ENCODE measurements at regions of chr3 and their contacts with region 1.

Region 1: GRCh38 chr3:45118615-45119071 is 27.5 kb downstream of the CDCP1 start:
- DNase-seq: peak; percentile 30
- H3K4me3 Mint-ChIP-seq: peak overlapping the region; percentile 29
- H3K27ac Mint-ChIP-seq: peak overlapping the region; percentile 86
- H3K4me1 Mint-ChIP-seq: peaks cover 57% of the 10 kb centered on the region
- H3K27me3 Mint-ChIP-seq: peaks cover 22% of the 10 kb centered on the region

Region 2: DNA sequence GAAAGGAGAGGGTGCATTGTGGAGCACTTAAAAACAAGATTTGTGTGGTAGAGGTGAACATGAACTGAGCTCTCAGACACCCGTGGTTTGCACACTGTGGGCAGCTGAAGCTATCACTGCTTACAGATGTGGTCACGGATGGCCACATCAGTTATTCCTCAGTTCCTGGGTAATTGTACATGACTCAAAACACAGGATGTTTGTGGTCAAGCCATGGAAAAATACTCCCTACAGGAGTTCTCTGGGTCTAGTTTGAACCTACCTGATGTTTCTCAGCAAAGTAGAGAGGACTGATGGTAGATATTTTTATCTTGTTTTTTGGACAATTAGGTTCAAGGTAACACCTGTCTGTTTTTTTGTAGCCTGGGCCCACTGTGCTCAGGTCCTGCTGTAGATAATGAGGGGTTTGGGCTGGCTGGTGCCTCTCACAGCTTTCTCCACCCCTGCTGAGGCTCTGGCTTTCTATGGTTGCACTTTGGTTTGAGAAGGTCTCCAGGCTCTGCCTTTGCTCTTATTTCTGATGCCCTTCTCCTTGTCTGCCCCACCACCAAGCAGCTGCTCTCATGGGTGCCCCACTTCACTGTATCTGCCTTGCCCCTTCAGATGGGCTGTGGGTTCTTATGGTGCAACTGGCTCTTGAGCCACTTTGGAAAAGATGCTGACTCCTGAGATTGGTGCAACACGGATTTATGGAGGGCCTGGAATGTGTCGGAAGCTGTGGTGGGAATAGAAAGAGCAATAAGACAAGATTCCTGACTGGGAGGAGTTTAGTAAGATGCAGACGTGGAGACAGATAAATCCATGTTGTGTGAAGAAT is 12.6 kb before region 1 on chr3:
- CTCF ChIA-PET with region 1: interaction called, 5 read pairs
- POLR2A ChIA-PET with region 1: interaction called, 15 read pairs
- DNase-seq: peak; percentile 81
- H3K4me3 Mint-ChIP-seq: peak overlapping the region; percentile 15
- H3K27ac Mint-ChIP-seq: peak overlapping the region; percentile 65
- H3K4me1 Mint-ChIP-seq: peaks cover 73% of the 10 kb centered on the region
- H3K27me3 Mint-ChIP-seq: peaks cover 22% of the 10 kb centered on the region

Region 3: GRCh38 chr3:45145681-45146614 is 27.3 kb after region 1 on chr3 and contains the start of gene CDCP1:
- CTCF ChIA-PET with region 1: no interaction called
- POLR2A ChIA-PET with region 1: no interaction called
- DNase-seq: no peak
- H3K4me3 Mint-ChIP-seq: peak within 1 kb of the TSS; percentile 70
- H3K27ac Mint-ChIP-seq: no peak within 1 kb of the TSS
- H3K4me1 Mint-ChIP-seq: peaks cover 16% of the 10 kb centered on the region
- H3K27me3 Mint-ChIP-seq: peaks cover 69% of the 10 kb centered on the region
- total RNA-seq, gene CDCP1: 1.9 to 2.2 TPM

Region 4: DNA sequence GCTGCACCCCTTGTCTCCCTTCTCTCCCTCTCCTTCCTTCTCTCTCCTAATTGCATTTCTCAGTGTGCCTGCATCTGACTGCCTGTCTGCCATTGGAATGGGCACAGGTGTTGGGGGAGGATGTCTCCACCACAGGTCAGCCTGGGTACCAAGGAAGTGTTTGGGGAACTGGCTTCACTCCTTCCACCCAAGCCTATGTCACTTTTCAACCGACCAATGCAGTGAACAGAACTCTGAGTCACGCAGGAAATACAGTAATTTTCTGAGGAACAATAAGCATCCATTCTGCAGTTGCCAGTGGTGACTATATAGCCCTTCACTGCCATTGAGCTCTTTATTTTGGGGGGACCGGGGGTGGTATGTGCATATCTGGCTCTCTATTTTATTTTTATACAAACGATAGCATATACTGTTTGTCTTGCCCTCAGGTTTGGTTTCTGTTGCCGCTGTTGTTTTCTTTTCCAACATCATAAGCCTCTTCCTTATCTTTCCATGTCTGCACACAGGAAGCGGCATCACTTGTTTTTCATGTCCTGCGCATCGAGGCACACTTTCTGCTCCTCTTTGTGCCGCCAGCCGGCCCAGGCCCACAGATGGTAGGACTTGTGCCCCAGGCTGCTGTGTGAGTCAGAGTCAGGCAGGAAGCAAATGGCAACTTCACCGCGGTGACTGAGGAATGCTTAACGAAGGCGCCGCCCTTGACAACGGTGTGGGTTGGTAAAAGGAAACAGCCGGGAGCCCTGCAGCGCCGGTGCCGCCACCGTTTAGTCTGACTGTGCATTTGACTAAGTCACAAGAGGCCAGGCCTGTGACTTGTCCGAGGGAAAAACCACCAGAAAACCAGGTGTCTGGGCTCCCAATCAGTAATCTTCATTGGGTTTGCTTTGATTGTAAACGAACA is 48.6 kb after region 1 on chr3:
- CTCF ChIA-PET with region 1: interaction called, 3 read pairs
- POLR2A ChIA-PET with region 1: interaction called, 14 read pairs
- DNase-seq: peak; percentile 91
- H3K4me3 Mint-ChIP-seq: peak overlapping the region; percentile 47
- H3K27ac Mint-ChIP-seq: peak overlapping the region; percentile 91
- H3K4me1 Mint-ChIP-seq: peaks cover 48% of the 10 kb centered on the region
- H3K27me3 Mint-ChIP-seq: peaks cover 7% of the 10 kb centered on the region

Region 5: GRCh38 chr3:45218578-45219390 is 100.1 kb after region 1 on chr3:
- CTCF ChIA-PET with region 1: no interaction called
- POLR2A ChIA-PET with region 1: no interaction called
- DNase-seq: no peak
- H3K4me3 Mint-ChIP-seq: no peak overlapping the region
- H3K27ac Mint-ChIP-seq: no peak overlapping the region
- H3K4me1 Mint-ChIP-seq: peaks cover 4% of the 10 kb centered on the region
- H3K27me3 Mint-ChIP-seq: peaks cover 58% of the 10 kb centered on the region

Measured in activated CD4-positive, alpha-beta memory T cell treated with anti-CD3 and anti-CD28 coated beads, Interleukin-2, amount 10 ng/mL, durations not matched to agents 7 days and 5 days (primary cell).